ENCODE measurements at regions of chr1 and their contacts with region 1.

Region 1: DNA sequence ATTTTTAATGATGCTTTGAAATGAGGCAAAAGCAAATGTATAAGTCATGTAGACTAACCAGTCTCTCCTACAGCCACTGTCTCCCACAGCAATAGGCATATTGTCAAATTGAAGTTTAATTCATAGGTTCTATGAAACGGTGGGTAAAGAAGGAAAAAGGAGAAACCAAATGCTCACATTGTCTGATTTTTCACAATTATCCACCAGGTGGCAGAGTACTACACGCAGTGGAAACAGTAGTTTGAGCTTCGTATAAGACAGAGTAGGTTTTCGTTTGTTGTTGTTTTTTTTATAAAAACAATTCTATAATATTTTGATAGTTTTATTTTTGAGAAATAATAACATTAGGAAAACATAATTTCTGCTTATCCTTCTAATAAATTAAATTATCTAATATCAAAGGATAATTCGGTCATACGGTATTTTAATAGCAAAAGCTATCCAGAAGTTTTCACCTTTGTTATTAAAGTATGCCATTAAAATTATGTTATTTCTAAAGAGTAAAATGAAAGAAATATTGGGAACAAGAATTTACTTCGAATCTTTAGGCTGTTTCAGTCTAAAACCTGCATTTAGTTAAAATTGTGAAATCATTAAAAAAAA is 39.1 kb downstream of the TYW3 start:
- DNase-seq: peak; percentile 4
- H3K4me3 ChIP-seq: no peak overlapping the region
- CTCF ChIP-seq: peak; percentile 61

Region 2: GRCh38 chr1:74835051-74835450 is 63.0 kb after region 1 on chr1:
- CTCF ChIA-PET with region 1: no interaction called
- POLR2A ChIA-PET with region 1: no interaction called
- DNase-seq: no peak
- H3K4me3 ChIP-seq: no peak overlapping the region
- CTCF ChIP-seq: no peak

Region 3: GRCh38 chr1:75203415-75204277 is 431.6 kb after region 1 on chr1:
- CTCF ChIA-PET with region 1: interaction called, 148 read pairs
- POLR2A ChIA-PET with region 1: interaction called, 3 read pairs
- DNase-seq: no peak
- H3K4me3 ChIP-seq: no peak overlapping the region
- CTCF ChIP-seq: peak; percentile 47

Region 4: DNA sequence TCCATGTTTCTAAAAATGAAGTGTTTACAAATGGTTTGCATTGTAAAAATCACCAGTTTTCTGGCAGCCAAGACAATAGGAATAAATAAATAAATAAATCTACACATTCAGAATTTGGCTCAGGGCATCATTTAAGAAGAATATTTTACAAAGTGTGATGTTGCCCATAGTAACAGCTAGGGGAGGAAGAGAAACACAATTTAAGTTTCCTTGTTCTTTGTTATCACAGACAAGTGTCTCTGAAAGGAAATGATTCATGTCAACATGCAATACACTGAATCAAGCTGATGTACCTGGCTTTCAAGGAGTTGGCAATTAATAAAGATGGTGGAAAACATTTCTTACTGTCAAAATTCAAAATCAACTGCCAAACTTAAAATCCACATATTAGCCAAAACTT is 436.8 kb after region 1 on chr1:
- CTCF ChIA-PET with region 1: interaction called, 148 read pairs
- POLR2A ChIA-PET with region 1: interaction called, 3 read pairs
- DNase-seq: no peak
- H3K4me3 ChIP-seq: no peak overlapping the region
- CTCF ChIP-seq: no peak

Measured in AG04449 (cell line).